Posterior vena cava (tissue), 2 donors: ENCODE measurements at regions of chr10 and their contacts with region 1.

Region 1: GRCh38 chr10:412109-412508 is 276.9 kb downstream of the ZMYND11 start:
- DNase-seq: no peak

Region 2: DNA sequence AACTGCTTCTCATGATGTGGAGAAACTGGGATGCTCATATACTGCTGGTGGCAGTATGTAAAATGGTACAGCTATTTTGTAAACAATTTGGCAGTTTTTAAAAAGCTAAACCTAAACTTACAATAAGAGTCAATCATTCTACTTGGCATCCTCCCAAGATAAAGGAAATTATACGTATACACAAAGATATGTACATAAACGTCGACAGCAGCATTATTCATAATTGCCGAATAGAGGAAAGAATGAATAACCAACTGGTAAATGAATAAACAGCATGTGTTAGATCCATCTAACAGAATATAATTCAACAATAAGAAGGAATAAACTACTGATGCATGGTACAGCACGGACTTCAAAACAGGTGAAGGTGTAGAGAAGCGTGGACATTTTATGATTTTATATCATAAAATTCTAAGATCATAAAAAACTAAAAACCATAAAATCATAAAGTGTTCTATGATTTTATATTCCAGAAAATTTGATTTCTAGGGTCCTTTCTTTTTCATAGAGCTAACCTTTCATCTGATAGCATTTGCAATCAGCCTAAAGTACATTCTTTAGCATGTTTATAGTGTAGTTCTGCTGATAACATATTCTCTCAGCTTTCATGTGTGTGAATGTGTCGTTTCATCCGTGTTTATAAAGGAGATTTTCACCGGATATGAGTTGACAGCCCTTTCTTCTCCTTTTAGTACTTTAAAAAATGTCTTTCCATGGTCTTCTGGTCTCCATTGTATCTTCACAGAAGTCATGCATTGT is 15.8 kb after region 1 on chr10:
- intact Hi-C with region 1: loop called in 1 of 2 experiments (anchors 1 kb)
- DNase-seq: no peak

Region 3: DNA sequence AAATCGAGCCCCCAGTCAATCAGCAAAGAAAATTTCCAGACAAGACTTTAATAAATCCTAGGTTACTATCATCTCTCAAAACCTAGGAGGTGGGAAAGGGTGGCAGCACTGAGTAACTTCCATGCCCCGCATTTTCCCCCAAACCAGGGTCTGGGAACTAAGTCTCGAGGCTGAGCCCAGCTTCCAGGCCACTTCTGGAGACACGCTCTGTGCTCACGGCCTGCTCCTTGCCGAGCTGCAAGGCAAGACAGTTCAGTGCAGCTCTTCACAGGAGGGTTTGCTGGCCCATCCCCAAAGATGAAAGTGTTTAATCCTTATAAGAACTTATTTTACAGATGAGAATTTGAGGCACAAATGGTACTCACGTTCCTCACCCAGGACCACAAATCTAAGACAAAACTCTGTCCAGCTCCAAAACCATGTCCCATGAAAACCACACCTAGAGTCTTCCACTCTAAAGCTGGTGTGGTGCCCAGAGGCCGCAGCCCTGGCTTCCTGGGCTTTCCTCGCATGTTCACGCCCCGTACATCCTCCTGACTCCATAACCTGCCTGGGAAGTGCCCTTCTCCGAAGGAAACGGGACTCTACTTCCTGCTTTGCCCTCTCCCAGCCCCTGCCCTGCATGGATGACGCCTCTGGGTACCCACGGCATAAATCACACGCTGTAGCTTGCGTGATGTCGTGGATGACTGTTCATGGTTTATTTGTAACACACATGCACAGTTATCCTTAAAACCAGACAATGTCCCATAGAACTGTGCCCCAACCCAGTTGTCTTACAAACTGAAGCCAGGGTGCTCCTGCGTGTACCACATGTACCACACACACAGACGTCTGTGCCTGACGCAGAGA is 76.2 kb after region 1 on chr10:
- intact Hi-C with region 1: loop called in 1 of 2 experiments (anchors 2 kb)
- DNase-seq: peak; percentile 72

Region 4: GRCh38 chr10:520406-520795 is 108.3 kb after region 1 on chr10:
- intact Hi-C with region 1: no loop called
- DNase-seq: peak; percentile 69